Colonic mucosa (tissue), 4 donors: ENCODE measurements at regions of chr11 and their contacts with region 1.

Region 1: GRCh38 chr11:124070915-124071635 is 29.9 kb upstream of the OR10G7 start:
- DNase-seq: peak; percentile 70
- H3K4me3 ChIP-seq: no peak overlapping the region
- H3K27ac ChIP-seq: no peak overlapping the region
- H3K4me1 ChIP-seq: peaks cover 3% of the 10 kb centered on the region
- H3K27me3 ChIP-seq: no peaks in the 10 kb centered on the region
- CTCF ChIP-seq: peak; percentile 64

Region 2: DNA sequence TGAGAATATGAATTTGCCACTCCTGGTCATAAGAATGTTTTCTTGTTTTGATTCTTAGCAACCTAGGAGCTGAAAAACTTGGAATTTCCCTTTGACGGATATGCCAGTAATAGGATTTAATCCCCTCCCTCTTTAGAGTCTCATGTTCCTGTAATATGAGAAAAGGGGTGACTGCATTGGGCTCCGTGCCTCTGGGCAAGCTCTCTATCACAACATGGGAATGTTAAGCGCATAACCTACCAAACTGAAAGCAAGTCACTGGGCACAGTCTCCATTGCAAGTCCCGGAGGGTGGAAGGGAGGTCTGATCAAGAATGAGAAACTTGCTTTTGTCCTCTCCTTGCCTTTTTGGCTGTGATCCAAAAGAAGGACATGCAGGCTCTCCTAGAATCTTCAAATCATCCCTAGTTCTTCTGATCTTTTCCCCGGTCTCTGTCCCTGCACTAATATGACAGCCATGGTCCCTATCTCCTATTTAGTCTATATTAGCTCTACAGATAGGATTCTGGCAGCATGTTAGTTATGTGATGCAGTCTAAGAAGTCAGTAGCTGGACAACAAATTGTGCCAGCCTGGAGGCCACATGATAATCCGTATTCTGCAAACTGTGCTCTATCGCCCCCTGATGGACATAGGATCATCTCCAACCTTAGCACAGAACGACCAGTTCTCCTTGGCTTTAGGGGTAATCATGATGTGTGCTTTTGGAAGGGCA is 123.8 kb after region 1 on chr11:
- intact Hi-C with region 1: loop called (anchors 2 kb)
- DNase-seq: peak; percentile 75
- H3K4me3 ChIP-seq: no peak overlapping the region
- H3K27ac ChIP-seq: no peak overlapping the region
- H3K4me1 ChIP-seq: no peaks in the 10 kb centered on the region
- H3K27me3 ChIP-seq: no peaks in the 10 kb centered on the region
- CTCF ChIP-seq: peak; percentile 73

Region 3: DNA sequence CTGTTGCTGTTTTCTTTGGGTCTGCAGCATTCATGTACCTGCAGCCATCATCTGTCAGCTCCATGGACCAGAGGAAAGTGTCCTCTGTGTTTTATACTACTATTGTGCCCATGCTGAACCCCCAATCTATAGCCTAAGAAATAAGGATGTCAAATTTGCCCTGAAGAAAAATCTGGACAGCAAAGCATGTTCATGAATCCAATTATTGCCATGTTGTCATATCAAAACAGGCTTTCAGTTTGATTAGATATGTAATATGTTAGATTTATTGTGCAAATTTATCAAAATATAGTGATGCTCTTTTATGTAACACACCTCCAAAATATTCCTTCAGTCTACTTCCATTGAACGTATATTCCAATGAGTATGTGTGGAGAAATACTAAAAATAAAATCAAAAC is 154.4 kb after region 1 on chr11:
- intact Hi-C with region 1: no loop called
- DNase-seq: no peak
- H3K4me3 ChIP-seq: no peak overlapping the region
- H3K27ac ChIP-seq: no peak overlapping the region
- H3K4me1 ChIP-seq: no peaks in the 10 kb centered on the region
- H3K27me3 ChIP-seq: no peaks in the 10 kb centered on the region
- CTCF ChIP-seq: no peak

Region 4: GRCh38 chr11:124592627-124593026 is 521.6 kb after region 1 on chr11:
- intact Hi-C with region 1: loop called (anchors 10 kb)
- DNase-seq: no peak
- H3K4me3 ChIP-seq: no peak overlapping the region
- H3K27ac ChIP-seq: no peak overlapping the region
- H3K4me1 ChIP-seq: no peaks in the 10 kb centered on the region
- H3K27me3 ChIP-seq: no peaks in the 10 kb centered on the region
- CTCF ChIP-seq: no peak